Activated CD8-positive, alpha-beta T cell treated with anti-CD3 and anti-CD28 coated beads, Interleukin-2, amount 10 ng/mL, durations not matched to agents 7 days and 5 days (primary cell): ENCODE measurements at regions of chr11 and their contacts with region 1.

Region 1: DNA sequence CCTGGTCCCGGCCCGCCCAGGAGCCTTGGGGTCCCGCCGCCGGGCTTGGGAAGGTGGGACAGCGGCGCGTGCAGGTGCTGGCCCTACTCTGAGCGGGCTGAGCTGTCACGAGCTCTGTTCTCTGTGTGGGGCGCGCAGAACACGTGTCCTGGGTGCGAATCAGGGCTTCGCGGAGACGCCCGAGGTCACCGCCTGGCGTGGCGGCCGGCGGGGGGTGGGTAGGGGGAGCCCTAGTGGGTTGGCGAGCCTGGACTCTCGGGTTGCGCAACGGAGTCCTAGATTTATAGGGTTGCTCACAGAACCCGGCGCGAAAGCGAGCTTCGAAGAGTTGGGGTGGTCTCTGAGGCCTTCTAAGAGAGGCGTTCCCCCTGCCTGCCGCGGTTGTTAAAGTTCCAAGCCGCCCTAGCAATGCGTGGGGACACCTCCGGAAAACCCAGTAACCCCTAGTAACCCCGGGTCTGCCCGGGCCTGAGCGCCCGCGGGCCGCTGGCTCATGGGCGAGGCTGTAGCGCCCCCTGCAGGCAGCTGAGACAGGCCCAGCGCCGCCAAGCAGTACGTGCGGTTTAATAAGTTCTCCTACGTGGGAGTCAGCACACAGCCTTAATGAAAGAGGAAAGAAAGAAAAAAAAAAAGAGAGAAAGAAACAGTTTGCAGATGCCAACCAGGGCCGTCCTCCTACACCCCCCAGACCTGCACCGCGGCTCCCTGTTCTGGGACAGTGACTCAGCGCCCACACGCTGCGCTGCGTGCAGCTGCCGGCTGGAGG is 2.8 kb downstream of the ADM start:
- DNase-seq: peak; percentile 84
- ATAC-seq: peak; percentile 73
- H3K4me3 Mint-ChIP-seq: peak overlapping the region; percentile 96
- H3K27ac Mint-ChIP-seq: peak overlapping the region; percentile 77
- H3K4me1 Mint-ChIP-seq: peaks cover 59% of the 10 kb centered on the region
- H3K27me3 Mint-ChIP-seq: peaks cover 46% of the 10 kb centered on the region

Region 2: DNA sequence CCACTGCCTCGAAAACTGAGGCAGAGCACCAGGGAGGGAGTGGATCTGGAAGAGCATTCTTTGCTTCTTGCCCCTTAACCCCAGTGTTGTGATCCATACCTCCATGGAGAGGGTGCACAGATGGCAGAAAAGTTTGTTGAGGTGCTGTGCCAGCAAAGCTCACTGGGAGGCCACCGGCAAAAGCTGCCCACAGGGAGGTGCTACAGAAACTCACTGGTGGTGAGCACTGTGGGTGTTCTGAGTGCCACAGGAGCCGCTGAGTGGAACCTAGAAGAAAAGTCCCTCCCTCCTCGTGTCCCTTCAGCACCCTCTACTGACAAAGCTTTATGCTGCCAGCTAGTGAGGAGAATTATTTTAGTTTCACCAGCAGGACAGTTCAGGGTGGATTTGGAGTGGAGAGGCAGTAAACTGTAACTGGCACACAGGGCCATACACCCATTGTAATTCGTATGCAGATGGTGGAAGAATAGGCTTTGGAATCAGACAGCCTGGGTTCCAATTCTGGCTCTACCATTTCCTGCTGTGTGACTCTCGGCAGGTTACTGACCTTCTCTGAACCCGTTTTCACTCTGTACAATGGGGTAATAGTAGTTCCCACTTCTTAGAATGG is 559.2 kb before region 1 on chr11:
- CTCF ChIA-PET with region 1: interaction called, 13 read pairs
- POLR2A ChIA-PET with region 1: interaction called, 3 read pairs
- DNase-seq: peak; percentile 84
- ATAC-seq: peak; percentile 99
- H3K4me3 Mint-ChIP-seq: no peak overlapping the region
- H3K27ac Mint-ChIP-seq: no peak overlapping the region
- H3K4me1 Mint-ChIP-seq: peaks cover 21% of the 10 kb centered on the region
- H3K27me3 Mint-ChIP-seq: no peaks in the 10 kb centered on the region

Region 3: DNA sequence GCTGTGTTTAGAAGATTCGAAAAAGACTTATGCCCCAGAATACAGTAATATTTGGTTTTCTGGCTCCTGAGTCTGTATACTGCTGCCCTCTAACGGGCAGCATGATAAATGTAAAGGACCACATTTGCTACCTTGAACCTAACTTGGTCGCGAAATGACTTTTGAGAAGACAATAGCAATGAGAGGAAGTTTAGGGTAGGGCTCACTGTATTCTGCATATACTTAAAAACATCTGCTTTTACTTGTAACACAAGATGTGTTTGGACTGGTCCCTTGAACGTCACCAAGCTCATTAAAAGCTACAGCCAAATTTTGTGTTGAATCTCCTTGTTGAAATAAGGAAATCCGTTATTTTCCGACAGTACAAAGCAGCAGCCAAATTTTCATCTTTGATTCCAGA is 334.6 kb before region 1 on chr11:
- CTCF ChIA-PET with region 1: interaction called, 14 read pairs
- POLR2A ChIA-PET with region 1: no interaction called
- DNase-seq: peak; percentile 44
- ATAC-seq: peak; percentile 60
- H3K4me3 Mint-ChIP-seq: no peak overlapping the region
- H3K27ac Mint-ChIP-seq: no peak overlapping the region
- H3K4me1 Mint-ChIP-seq: peaks cover 3% of the 10 kb centered on the region
- H3K27me3 Mint-ChIP-seq: no peaks in the 10 kb centered on the region

Region 4: GRCh38 chr11:10208131-10208575 is 99.5 kb before region 1 on chr11:
- CTCF ChIA-PET with region 1: interaction called, 85 read pairs
- POLR2A ChIA-PET with region 1: no interaction called
- DNase-seq: no peak
- ATAC-seq: peak; percentile 70
- H3K4me3 Mint-ChIP-seq: no peak overlapping the region
- H3K27ac Mint-ChIP-seq: no peak overlapping the region
- H3K4me1 Mint-ChIP-seq: no peaks in the 10 kb centered on the region
- H3K27me3 Mint-ChIP-seq: peaks cover 17% of the 10 kb centered on the region

Region 5: DNA sequence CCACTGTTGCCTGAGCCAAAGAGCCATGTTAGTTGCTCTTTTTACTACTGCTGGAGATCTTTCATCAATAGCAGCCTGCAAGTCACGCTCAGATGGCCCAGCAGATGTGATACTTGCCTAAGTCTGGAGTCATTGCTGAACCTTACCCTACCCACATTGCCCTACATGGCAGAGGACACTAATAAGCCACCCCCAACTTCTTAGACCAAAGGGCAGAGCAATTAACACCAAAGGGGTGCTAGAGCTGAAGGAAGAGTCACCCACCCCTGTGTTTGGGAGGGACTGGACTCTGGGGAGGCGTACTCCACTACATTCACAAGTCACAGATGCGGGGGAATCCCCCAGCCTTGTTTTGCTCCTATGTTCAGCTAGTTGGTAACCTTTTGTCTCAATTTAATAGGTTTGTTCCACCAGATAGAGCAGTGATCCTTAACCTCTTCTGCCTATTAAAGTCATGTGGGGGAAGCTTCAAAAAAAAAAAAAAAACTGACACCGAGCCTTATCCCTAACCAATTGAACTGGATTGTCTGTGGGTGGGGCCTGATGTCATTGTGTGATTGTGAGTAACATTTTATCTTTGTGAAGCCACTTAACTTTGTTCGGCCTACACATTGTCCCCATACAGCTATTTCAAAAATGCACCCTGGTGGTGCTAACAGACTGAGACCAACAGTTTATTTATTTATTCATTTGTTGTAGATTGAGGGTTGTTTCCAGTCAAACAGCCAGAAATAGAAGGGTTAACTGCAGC is 10.3 kb after region 1 on chr11:
- CTCF ChIA-PET with region 1: interaction called, 17 read pairs
- POLR2A ChIA-PET with region 1: interaction called, 3 read pairs
- DNase-seq: no peak
- ATAC-seq: no peak
- H3K4me3 Mint-ChIP-seq: no peak overlapping the region
- H3K27ac Mint-ChIP-seq: no peak overlapping the region
- H3K4me1 Mint-ChIP-seq: peaks cover 9% of the 10 kb centered on the region
- H3K27me3 Mint-ChIP-seq: no peaks in the 10 kb centered on the region

Region 6: GRCh38 chr11:10366568-10367370 is 59.1 kb after region 1 on chr11:
- CTCF ChIA-PET with region 1: interaction called, 12 read pairs
- POLR2A ChIA-PET with region 1: no interaction called
- DNase-seq: peak; percentile 73
- ATAC-seq: peak; percentile 68
- H3K4me3 Mint-ChIP-seq: no peak overlapping the region
- H3K27ac Mint-ChIP-seq: no peak overlapping the region
- H3K4me1 Mint-ChIP-seq: peaks cover 7% of the 10 kb centered on the region
- H3K27me3 Mint-ChIP-seq: peaks cover 14% of the 10 kb centered on the region